Common myeloid progenitor, CD34-positive (primary cell): ENCODE measurements at regions of chr5 and their contacts with region 1.

Region 1: DNA sequence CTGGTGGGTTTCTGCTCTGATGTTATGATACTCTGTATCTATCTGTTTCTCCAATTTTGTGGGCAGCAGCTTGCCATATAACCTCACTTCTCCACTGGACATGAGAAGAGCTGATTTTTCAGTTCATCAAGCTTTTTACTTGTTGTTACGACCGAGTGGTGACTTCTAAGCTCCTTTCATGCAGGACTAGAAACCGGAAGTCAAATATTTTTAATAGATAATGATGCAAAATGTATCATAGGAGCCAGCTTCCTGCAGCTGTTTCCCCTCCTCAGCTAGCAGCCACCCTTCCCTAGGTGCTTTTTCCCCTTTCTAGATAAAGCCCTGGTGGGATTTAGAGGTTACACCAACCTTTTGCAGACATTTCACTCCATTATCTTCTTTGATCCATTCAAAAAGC is 17.0 kb upstream of the ADAM19 start:
- DNase-seq: peak; percentile 41 to 87 (median 80)
- H3K4me3 ChIP-seq: peak overlapping the region in 4 of 7 experiments; percentile 16 to 53 (median 28)
- H3K27ac ChIP-seq: peak overlapping the region in 1 of 2 experiments; percentile 41
- H3K4me1 ChIP-seq: peaks cover 17 to 33% (median 21%) of the 10 kb centered on the region in 4 experiments
- H3K27me3 ChIP-seq: no peaks in the 10 kb centered on the region

Region 2: GRCh38 chr5:156623381-156624040 is 969.1 kb before region 1 on chr5:
- CTCF ChIA-PET with region 1: no interaction called
- POLR2A ChIA-PET with region 1: no interaction called
- DNase-seq: no peak
- H3K4me3 ChIP-seq: no peak overlapping the region
- H3K27ac ChIP-seq: no peak overlapping the region
- H3K4me1 ChIP-seq: no peaks in the 10 kb centered on the region
- H3K27me3 ChIP-seq: no peaks in the 10 kb centered on the region

Region 3: GRCh38 chr5:157607371-157608161 is 15.0 kb after region 1 on chr5:
- CTCF ChIA-PET with region 1: interaction called, 10 read pairs
- POLR2A ChIA-PET with region 1: interaction called, 5 read pairs
- DNase-seq: peak in 2 of 3 donors; percentile 68 to 81
- H3K4me3 ChIP-seq: no peak overlapping the region
- H3K27ac ChIP-seq: no peak overlapping the region
- H3K4me1 ChIP-seq: peaks cover 0 to 25% (median 6%) of the 10 kb centered on the region in 4 experiments
- H3K27me3 ChIP-seq: no peaks in the 10 kb centered on the region